Activated B cell treated with CpG ODN at 0.5 μM for 24 hours (primary cell): ENCODE measurements at regions of chr3 and their contacts with region 1.

Region 1: GRCh38 chr3:167380004-167380689 is at the start of gene ZBBX:
- DNase-seq: peak; percentile 79
- ATAC-seq: peak; percentile 95
- H3K4me3 Mint-ChIP-seq: peak within 1 kb of the TSS; percentile 86
- H3K27ac Mint-ChIP-seq: peak within 1 kb of the TSS; percentile 53
- H3K4me1 Mint-ChIP-seq: peaks cover 6% of the 10 kb centered on the region
- H3K27me3 Mint-ChIP-seq: peaks cover 3% of the 10 kb centered on the region
- CTCF ChIP-seq: peak; percentile 38
- total RNA-seq, gene ZBBX: not detected in 2 replicates

Region 2: GRCh38 chr3:167684388-167684993 is 304.3 kb after region 1 on chr3:
- CTCF ChIA-PET with region 1: interaction called, 36 read pairs
- POLR2A ChIA-PET with region 1: interaction called, 9 read pairs
- intact Hi-C with region 1: loop called (anchors 1 kb)
- DNase-seq: no peak
- ATAC-seq: peak; percentile 75
- H3K4me3 Mint-ChIP-seq: no peak overlapping the region
- H3K27ac Mint-ChIP-seq: no peak overlapping the region
- H3K4me1 Mint-ChIP-seq: no peaks in the 10 kb centered on the region
- H3K27me3 Mint-ChIP-seq: no peaks in the 10 kb centered on the region
- CTCF ChIP-seq: no peak

Region 3: DNA sequence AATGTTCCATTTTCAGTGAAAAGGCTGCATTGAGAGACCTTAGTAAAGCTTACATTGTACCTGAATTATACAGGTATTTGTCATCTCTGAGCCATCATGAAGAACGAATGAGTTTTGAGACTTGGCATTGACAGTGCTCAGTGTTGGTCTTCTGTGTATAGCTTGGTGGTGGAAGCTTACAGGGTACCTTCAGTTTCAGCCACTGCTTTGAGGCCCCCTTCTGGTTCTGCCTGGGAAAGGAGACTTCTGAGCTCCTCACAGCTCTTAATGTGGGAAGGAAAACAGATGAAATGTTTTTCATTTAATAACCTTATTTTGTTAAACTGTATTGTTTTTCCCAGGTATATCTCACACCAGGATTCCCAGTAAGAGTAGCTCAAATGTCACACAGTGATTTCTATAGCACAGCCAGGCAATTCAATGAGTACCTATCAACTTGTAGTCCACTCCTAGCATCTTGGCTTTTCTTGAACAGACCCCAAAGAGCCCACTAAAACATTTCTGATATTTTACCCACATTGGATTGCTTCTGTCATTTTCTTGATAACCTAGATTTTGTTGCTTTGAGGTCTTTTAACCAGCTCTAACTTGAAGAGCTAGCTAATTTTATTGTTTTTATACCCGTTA is 360.9 kb after region 1 on chr3:
- CTCF ChIA-PET with region 1: interaction called, 22 read pairs
- POLR2A ChIA-PET with region 1: no interaction called
- intact Hi-C with region 1: loop called (anchors 1 kb)
- DNase-seq: no peak
- ATAC-seq: peak; percentile 97
- H3K4me3 Mint-ChIP-seq: no peak overlapping the region
- H3K27ac Mint-ChIP-seq: peak overlapping the region; percentile 18
- H3K4me1 Mint-ChIP-seq: peaks cover 35% of the 10 kb centered on the region
- H3K27me3 Mint-ChIP-seq: no peaks in the 10 kb centered on the region
- CTCF ChIP-seq: no peak

Region 4: DNA sequence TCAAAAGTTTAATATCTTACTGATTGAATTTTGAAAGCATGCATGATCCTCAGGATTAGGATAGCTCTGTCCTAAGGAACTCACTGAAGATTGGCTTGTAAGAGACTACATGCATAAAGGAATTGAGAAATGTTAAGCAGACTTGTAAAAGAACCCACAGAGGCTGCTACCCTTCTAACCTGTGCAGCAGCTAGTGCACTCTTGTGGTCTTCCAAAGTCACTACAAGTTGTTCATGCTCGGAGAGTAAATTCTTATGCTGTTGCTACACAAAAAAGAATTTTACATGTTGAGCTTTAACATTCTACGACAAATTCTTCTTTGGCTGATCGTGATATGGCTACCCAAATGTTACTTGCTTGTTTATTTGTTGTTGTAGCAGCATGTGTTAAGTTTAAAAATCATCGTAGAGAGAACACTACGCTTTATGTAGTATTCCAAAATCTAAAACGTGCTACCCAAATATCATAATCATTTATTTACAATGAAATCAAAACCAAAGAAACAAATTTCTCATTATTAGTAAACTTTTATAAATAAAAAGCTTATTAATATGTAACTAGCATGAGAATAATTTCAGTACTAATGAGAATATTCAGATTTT is 660.6 kb after region 1 on chr3:
- CTCF ChIA-PET with region 1: no interaction called
- POLR2A ChIA-PET with region 1: no interaction called
- intact Hi-C with region 1: loop called (anchors 5 kb)
- DNase-seq: no peak
- ATAC-seq: no peak
- H3K4me3 Mint-ChIP-seq: no peak overlapping the region
- H3K27ac Mint-ChIP-seq: no peak overlapping the region
- H3K4me1 Mint-ChIP-seq: no peaks in the 10 kb centered on the region
- H3K27me3 Mint-ChIP-seq: no peaks in the 10 kb centered on the region
- CTCF ChIP-seq: no peak